Naive thymus-derived CD4-positive, alpha-beta T cell (primary cell): ENCODE measurements at regions of chrX and their contacts with region 1.

Region 1: DNA sequence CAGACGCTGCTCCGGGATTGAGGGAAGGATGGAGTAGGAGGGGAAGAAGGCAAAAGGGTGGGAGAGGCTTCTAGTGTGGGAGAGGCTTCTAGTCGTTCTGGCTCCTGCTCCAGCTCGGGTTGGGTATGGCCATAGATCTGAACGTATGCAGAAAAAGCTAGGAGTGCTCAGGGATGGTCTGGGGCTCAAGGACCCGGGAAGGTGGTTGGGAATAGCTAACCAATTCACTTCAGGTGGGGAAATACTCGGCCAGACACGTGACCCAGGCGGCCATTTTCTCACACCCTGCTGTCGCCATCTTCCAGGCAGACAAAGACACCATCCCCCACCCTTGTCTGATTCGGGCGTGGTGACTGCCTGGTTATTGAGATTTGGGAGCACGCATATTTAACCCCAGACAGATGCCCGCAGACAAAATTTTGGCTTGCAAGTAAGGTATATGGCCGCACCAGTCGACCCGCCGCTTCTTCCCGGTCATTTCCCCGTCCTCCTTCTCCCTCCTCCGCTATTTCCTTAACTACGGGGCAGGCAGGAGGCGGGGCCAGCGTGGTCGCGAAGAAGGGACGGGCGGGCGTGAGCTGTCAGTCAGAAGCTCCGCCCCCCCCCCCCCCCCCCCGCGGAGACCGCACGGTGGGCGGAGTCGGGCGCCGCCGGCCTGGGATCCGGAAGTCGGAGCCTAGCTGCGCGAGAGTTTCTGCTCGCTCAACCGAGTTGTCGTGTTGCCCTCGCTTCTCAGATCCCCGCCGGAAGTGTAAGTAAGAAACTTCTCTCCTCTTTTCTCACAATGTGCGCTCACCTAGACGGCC is at the start of gene GNL3L:
- DNase-seq: peak; percentile 58 to 84 (median 76)
- ATAC-seq: peak; percentile 93
- H3K4me3 ChIP-seq: peak within 1 kb of the TSS; percentile 82
- H3K4me3 Mint-ChIP-seq: peak within 1 kb of the TSS; percentile 87 to 97 (median 94)
- H3K27ac ChIP-seq: peak within 1 kb of the TSS; percentile 82
- H3K27ac Mint-ChIP-seq: peak within 1 kb of the TSS; percentile 87 to 99 (median 93)
- H3K4me1 ChIP-seq: peaks cover 17 to 30% of the 10 kb centered on the region in 2 donors
- H3K4me1 Mint-ChIP-seq: peaks cover 10 to 46% (median 32%) of the 10 kb centered on the region in 7 donors
- H3K27me3 ChIP-seq: no peaks in the 10 kb centered on the region
- H3K27me3 Mint-ChIP-seq: no peaks in the 10 kb centered on the region
- total RNA-seq, gene GNL3L: 32.8 to 55.4 (median 41.8) TPM

Region 2: GRCh38 chrX:54357414-54358377 is 172.1 kb before region 1 on chrX and contains the start of gene WNK3:
- CTCF ChIA-PET with region 1: no interaction called
- POLR2A ChIA-PET with region 1: no interaction called
- intact Hi-C with region 1: loop called in 1 of 2 experiments (anchors 1 kb)
- DNase-seq: peak; percentile 9 to 48 (median 35)
- ATAC-seq: peak; percentile 72
- H3K4me3 ChIP-seq: peak within 1 kb of the TSS; percentile 52
- H3K4me3 Mint-ChIP-seq: peak within 1 kb of the TSS; percentile 75 to 92 (median 88)
- H3K27ac ChIP-seq: no peak within 1 kb of the TSS
- H3K27ac Mint-ChIP-seq: peak within 1 kb of the TSS; percentile 22 to 85 (median 58)
- H3K4me1 ChIP-seq: no peaks in the 10 kb centered on the region
- H3K4me1 Mint-ChIP-seq: peaks cover 7 to 25% (median 20%) of the 10 kb centered on the region in 7 donors
- H3K27me3 ChIP-seq: no peaks in the 10 kb centered on the region
- H3K27me3 Mint-ChIP-seq: peaks cover 0 to 52% (median 21%) of the 10 kb centered on the region in 5 donors
- total RNA-seq, gene WNK3: 0.15 to 0.95 (median 0.67) TPM

Region 3: DNA sequence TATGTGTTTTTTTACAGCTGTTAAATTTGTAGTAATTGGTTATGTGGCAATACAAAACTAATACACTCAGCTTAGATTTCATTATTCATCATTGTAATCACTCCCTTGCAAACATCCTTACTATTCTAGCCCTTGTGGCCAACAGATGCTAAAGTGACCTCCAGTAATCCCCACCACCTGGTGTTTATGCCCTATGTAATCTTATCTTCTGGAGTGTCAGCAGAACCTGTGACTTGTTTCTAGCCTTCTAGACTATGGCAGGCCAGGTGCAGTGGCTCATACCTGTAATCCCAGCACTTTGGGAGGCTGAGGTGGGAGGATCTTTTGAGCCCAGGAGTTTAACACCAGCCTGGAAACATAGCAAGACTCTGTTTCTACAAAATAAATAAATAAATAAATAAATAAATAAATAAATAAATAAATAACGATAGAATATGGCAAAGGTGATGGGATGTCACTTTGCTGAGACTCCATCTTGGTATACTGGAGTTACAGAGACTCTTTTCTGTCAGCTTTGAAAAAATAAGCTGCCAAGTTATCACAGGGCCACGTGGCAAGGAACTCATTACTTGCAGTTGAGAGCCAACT is 101.8 kb before region 1 on chrX:
- CTCF ChIA-PET with region 1: no interaction called
- POLR2A ChIA-PET with region 1: no interaction called
- intact Hi-C with region 1: no loop called
- DNase-seq: no peak
- ATAC-seq: no peak
- H3K4me3 ChIP-seq: no peak overlapping the region
- H3K4me3 Mint-ChIP-seq: no peak overlapping the region
- H3K27ac ChIP-seq: no peak overlapping the region
- H3K27ac Mint-ChIP-seq: no peak overlapping the region
- H3K4me1 ChIP-seq: no peaks in the 10 kb centered on the region
- H3K4me1 Mint-ChIP-seq: no peaks in the 10 kb centered on the region
- H3K27me3 ChIP-seq: no peaks in the 10 kb centered on the region
- H3K27me3 Mint-ChIP-seq: peaks cover 0 to 3% (median 0%) of the 10 kb centered on the region in 5 donors

Region 4: GRCh38 chrX:54439967-54440871 is 89.5 kb before region 1 on chrX and contains the start of gene TSR2:
- CTCF ChIA-PET with region 1: no interaction called
- POLR2A ChIA-PET with region 1: interaction called, 14 read pairs
- intact Hi-C with region 1: loop called (anchors 1 kb)
- DNase-seq: peak; percentile 50 to 80 (median 74)
- ATAC-seq: peak; percentile 99
- H3K4me3 ChIP-seq: peak within 1 kb of the TSS; percentile 94
- H3K4me3 Mint-ChIP-seq: peak within 1 kb of the TSS; percentile 84 to 100 (median 92)
- H3K27ac ChIP-seq: peak within 1 kb of the TSS; percentile 81
- H3K27ac Mint-ChIP-seq: peak within 1 kb of the TSS; percentile 73 to 94 (median 86)
- H3K4me1 ChIP-seq: peaks cover 8 to 12% of the 10 kb centered on the region in 2 donors
- H3K4me1 Mint-ChIP-seq: peaks cover 15 to 39% (median 26%) of the 10 kb centered on the region in 7 donors
- H3K27me3 ChIP-seq: no peaks in the 10 kb centered on the region
- H3K27me3 Mint-ChIP-seq: no peaks in the 10 kb centered on the region
- total RNA-seq, gene TSR2: 33.6 to 43.3 (median 40.5) TPM

Region 5: GRCh38 chrX:54808605-54809483 is 279.1 kb after region 1 on chrX:
- CTCF ChIA-PET with region 1: interaction called, 3 read pairs
- POLR2A ChIA-PET with region 1: interaction called, 3 read pairs
- intact Hi-C with region 1: loop called (anchors 1 to 5 kb)
- DNase-seq: peak; percentile 63 to 90 (median 84)
- ATAC-seq: peak; percentile 84
- H3K4me3 ChIP-seq: peak overlapping the region; percentile 93
- H3K4me3 Mint-ChIP-seq: peak overlapping the region; percentile 90 to 99 (median 96)
- H3K27ac ChIP-seq: peak overlapping the region; percentile 89
- H3K27ac Mint-ChIP-seq: peak overlapping the region; percentile 93 to 98 (median 96)
- H3K4me1 ChIP-seq: no peaks in the 10 kb centered on the region
- H3K4me1 Mint-ChIP-seq: peaks cover 5 to 28% (median 19%) of the 10 kb centered on the region in 7 donors
- H3K27me3 ChIP-seq: no peaks in the 10 kb centered on the region
- H3K27me3 Mint-ChIP-seq: peaks cover 0 to 25% (median 0%) of the 10 kb centered on the region in 5 donors